Activated CD4-positive, alpha-beta T cell treated with anti-CD3 and anti-CD28 coated beads for 36 hours (primary cell): ENCODE measurements at regions of chr1 and their contacts with region 1.

Region 1: DNA sequence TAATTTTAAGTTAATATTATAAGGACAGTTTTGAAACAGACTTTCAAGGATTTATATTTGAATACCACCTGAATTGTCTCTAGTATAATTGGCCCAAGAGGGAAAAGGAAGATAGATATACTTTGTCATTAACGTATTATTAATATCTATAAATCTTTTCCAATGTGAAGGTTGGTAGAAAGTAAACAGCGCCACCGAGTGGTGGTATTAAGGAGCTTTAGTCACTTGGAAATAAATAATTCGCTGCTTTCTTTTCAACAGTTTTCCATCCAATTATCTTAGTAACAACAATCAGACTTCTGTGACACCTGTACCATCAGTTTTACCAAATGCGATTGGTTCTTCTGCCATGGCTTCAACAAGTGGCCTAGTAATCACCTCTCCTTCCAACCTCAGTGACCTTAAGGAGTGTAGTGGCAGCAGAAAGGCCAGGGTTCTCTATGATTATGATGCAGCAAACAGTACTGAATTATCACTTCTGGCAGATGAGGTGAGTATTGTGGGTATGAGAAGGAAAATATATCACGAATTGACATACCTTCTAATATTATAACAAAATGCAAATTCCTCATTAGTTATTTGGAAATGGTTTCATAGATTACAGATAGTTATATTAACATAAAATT is 37.7 kb downstream of the SH3GLB1 start:
- DNase-seq: peak; percentile 47
- ATAC-seq: no peak
- H3K4me3 Mint-ChIP-seq: no peak overlapping the region
- H3K27ac Mint-ChIP-seq: no peak overlapping the region
- H3K4me1 Mint-ChIP-seq: peaks cover 2% of the 10 kb centered on the region
- H3K27me3 Mint-ChIP-seq: no peaks in the 10 kb centered on the region

Region 2: GRCh38 chr1:86380257-86380861 is 361.7 kb before region 1 on chr1:
- CTCF ChIA-PET with region 1: interaction called, 3 read pairs
- POLR2A ChIA-PET with region 1: no interaction called
- intact Hi-C with region 1: loop called (anchors 1 to 5 kb)
- DNase-seq: no peak
- ATAC-seq: peak; percentile 51
- H3K4me3 Mint-ChIP-seq: no peak overlapping the region
- H3K27ac Mint-ChIP-seq: no peak overlapping the region
- H3K4me1 Mint-ChIP-seq: peaks cover 8% of the 10 kb centered on the region
- H3K27me3 Mint-ChIP-seq: no peaks in the 10 kb centered on the region

Region 3: DNA sequence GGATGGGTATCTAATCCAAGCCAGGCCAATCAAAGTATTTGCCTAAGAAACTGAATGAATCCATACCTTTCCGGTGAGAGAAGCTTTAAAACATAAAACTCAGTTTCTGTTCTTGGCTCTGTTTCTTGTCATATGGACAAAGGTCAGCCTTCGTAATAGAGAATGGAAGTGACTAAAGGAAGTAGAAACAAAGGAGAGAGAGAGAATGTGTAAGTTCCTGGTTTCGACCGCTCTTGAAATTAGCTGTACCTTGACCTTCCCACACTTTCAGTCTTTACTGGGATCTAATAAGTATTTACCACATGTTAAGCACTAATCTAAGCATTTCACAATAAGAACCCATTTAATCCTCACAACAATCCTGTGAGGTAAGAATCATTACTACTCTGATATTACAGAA is 214.8 kb before region 1 on chr1:
- CTCF ChIA-PET with region 1: no interaction called
- POLR2A ChIA-PET with region 1: no interaction called
- intact Hi-C with region 1: no loop called
- DNase-seq: no peak
- ATAC-seq: no peak
- H3K4me3 Mint-ChIP-seq: no peak overlapping the region
- H3K27ac Mint-ChIP-seq: no peak overlapping the region
- H3K4me1 Mint-ChIP-seq: no peaks in the 10 kb centered on the region
- H3K27me3 Mint-ChIP-seq: peaks cover 3% of the 10 kb centered on the region

Region 4: GRCh38 chr1:86714159-86714558 is 27.9 kb before region 1 on chr1:
- CTCF ChIA-PET with region 1: interaction called, 10 read pairs
- POLR2A ChIA-PET with region 1: interaction called, 3 read pairs
- intact Hi-C with region 1: no loop called
- DNase-seq: no peak
- ATAC-seq: peak; percentile 16
- H3K4me3 Mint-ChIP-seq: no peak overlapping the region
- H3K27ac Mint-ChIP-seq: peak overlapping the region; percentile 73
- H3K4me1 Mint-ChIP-seq: peaks cover 35% of the 10 kb centered on the region
- H3K27me3 Mint-ChIP-seq: no peaks in the 10 kb centered on the region